AG04449 (cell line): ENCODE measurements at regions of chr7 and their contacts with region 1.

Region 1: GRCh38 chr7:82017334-82017943 is 247.6 kb upstream of the HGF start:
- DNase-seq: no peak
- H3K4me3 ChIP-seq: no peak overlapping the region
- CTCF ChIP-seq: peak; percentile 47

Region 2: GRCh38 chr7:81482600-81483186 is 534.7 kb before region 1 on chr7:
- CTCF ChIA-PET with region 1: interaction called, 66 read pairs
- POLR2A ChIA-PET with region 1: no interaction called
- DNase-seq: no peak
- H3K4me3 ChIP-seq: no peak overlapping the region
- CTCF ChIP-seq: peak; percentile 3

Region 3: DNA sequence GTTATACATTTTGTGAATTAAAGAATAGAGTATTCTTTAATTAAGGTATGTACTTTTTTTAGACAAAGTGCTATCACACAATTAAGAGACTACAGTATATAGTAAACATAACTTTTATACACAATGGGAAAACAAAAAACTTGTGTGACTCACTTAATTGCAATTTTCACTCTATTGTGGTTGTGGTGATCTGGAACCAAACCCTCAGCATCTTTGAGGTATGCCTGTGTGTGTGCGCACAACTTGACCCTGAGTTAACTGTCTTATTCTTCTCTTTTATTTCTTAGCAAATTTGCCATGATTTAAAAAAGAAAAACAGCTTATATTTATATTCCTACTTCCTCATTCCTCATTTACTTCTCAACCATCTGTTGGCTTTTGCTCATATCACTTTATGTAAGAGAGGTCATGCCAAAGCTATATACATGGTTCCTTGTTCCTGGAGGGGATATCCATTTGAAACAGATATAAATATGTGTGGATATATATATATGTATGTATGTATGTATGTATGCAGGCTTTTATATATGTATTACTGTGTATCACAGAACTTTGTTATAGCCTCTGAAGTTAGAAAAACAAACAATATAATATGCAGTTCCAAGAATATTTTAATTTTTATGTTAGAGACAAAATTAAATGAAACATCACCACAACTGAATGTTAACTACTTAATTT is 11.9 kb after region 1 on chr7:
- CTCF ChIA-PET with region 1: interaction called, 15 read pairs
- POLR2A ChIA-PET with region 1: no interaction called
- DNase-seq: no peak
- H3K4me3 ChIP-seq: no peak overlapping the region
- CTCF ChIP-seq: no peak